CD8-positive, alpha-beta T cell (primary cell): ENCODE measurements at regions of chr2 and their contacts with region 1.

Region 1: DNA sequence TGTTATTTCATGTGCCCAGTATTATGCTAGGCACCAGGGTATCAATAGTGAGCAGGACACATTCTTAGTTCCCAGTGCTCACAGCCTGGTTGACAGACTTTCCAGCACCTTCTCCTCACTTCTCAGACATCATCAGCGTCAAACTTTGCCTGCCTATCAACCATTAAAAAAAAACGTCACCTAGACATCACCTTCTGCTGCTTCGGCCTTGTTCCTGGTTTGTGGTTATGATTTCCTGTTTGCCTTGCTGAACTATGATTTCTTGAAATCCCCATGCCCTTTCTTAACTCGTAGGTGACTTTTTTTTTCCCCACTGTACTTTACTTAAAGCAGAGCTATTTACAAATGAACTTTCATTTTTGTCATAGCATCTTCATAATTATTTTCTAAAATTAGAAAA is 60.4 kb upstream of the NABP1 start:
- DNase-seq: peak; percentile 10 to 93 (median 49)
- ATAC-seq: peak; percentile 92
- H3K4me3 ChIP-seq: no peak overlapping the region
- H3K4me3 Mint-ChIP-seq: peak overlapping the region; percentile 42
- H3K27ac ChIP-seq: peak overlapping the region; percentile 12 to 76
- H3K27ac Mint-ChIP-seq: peak overlapping the region; percentile 86
- H3K4me1 ChIP-seq: peaks cover 26% of the 10 kb centered on the region
- H3K4me1 Mint-ChIP-seq: peaks cover 42% of the 10 kb centered on the region
- H3K27me3 ChIP-seq: no peaks in the 10 kb centered on the region
- H3K27me3 Mint-ChIP-seq: no peaks in the 10 kb centered on the region
- CTCF ChIP-seq: no peak

Region 2: DNA sequence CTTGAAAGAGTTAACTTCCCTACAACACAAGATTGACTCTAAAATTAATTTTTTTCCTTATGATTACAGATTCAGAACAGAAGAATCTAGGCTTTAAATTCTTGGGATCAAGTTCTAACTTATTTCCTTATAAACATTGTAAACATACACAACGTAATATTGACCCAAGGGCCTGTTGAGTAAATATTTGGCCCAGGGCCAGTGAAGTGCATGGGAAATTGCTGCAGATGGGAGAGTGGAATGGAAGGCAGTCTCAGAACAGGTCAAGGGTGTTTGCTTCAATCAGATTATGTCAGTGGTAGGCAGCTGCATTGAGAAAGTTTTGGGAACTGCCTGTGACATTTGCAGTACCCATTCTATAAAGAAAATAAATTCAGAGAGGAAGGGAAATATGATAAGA is 234.8 kb before region 1 on chr2:
- CTCF ChIA-PET with region 1: no interaction called
- POLR2A ChIA-PET with region 1: no interaction called
- intact Hi-C with region 1: no loop called
- DNase-seq: no peak
- ATAC-seq: no peak
- H3K4me3 ChIP-seq: no peak overlapping the region
- H3K4me3 Mint-ChIP-seq: no peak overlapping the region
- H3K27ac ChIP-seq: no peak overlapping the region
- H3K27ac Mint-ChIP-seq: no peak overlapping the region
- H3K4me1 ChIP-seq: no peaks in the 10 kb centered on the region
- H3K4me1 Mint-ChIP-seq: no peaks in the 10 kb centered on the region
- H3K27me3 ChIP-seq: no peaks in the 10 kb centered on the region
- H3K27me3 Mint-ChIP-seq: no peaks in the 10 kb centered on the region
- CTCF ChIP-seq: no peak

Region 3: DNA sequence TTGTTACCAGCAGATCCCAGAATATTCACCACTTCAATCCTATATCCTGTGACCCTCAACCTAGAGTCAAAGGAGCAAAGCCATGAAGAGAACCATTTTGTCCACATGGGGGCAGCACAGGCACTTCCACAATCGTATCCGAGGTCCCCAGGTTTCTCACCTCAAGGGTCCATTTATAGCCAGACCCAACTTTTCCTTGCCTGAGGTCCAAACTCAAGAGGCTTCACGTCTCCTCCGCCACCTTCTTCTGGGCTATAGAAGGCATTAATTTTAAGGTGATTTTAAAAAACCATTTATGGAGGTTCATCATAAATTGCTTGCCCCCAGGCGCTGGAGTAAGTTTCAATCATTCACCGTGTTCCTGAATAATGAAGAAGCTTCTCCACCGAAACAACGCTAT is 51.2 kb before region 1 on chr2:
- CTCF ChIA-PET with region 1: interaction called, 10 read pairs
- POLR2A ChIA-PET with region 1: no interaction called
- intact Hi-C with region 1: loop called (anchors 5 kb)
- DNase-seq: peak; percentile 33 to 81 (median 72)
- ATAC-seq: peak; percentile 55
- H3K4me3 ChIP-seq: no peak overlapping the region
- H3K4me3 Mint-ChIP-seq: no peak overlapping the region
- H3K27ac ChIP-seq: no peak overlapping the region
- H3K27ac Mint-ChIP-seq: no peak overlapping the region
- H3K4me1 ChIP-seq: peaks cover 11% of the 10 kb centered on the region
- H3K4me1 Mint-ChIP-seq: peaks cover 18% of the 10 kb centered on the region
- H3K27me3 ChIP-seq: peaks cover 0 to 12% of the 10 kb centered on the region in 2 experiments
- H3K27me3 Mint-ChIP-seq: peaks cover 29% of the 10 kb centered on the region
- CTCF ChIP-seq: peak; percentile 80

Region 4: GRCh38 chr2:191650896-191651773 is 33.6 kb after region 1 on chr2:
- CTCF ChIA-PET with region 1: no interaction called
- POLR2A ChIA-PET with region 1: no interaction called
- intact Hi-C with region 1: loop called in 1 of 2 experiments (anchors 5 kb)
- DNase-seq: no peak
- ATAC-seq: no peak
- H3K4me3 ChIP-seq: no peak overlapping the region
- H3K4me3 Mint-ChIP-seq: no peak overlapping the region
- H3K27ac ChIP-seq: no peak overlapping the region
- H3K27ac Mint-ChIP-seq: no peak overlapping the region
- H3K4me1 ChIP-seq: no peaks in the 10 kb centered on the region
- H3K4me1 Mint-ChIP-seq: no peaks in the 10 kb centered on the region
- H3K27me3 ChIP-seq: no peaks in the 10 kb centered on the region
- H3K27me3 Mint-ChIP-seq: no peaks in the 10 kb centered on the region
- CTCF ChIP-seq: no peak